Endothelial cell of umbilical vein (primary cell): ENCODE measurements at regions of chr10 and their contacts with region 1.

Region 1: DNA sequence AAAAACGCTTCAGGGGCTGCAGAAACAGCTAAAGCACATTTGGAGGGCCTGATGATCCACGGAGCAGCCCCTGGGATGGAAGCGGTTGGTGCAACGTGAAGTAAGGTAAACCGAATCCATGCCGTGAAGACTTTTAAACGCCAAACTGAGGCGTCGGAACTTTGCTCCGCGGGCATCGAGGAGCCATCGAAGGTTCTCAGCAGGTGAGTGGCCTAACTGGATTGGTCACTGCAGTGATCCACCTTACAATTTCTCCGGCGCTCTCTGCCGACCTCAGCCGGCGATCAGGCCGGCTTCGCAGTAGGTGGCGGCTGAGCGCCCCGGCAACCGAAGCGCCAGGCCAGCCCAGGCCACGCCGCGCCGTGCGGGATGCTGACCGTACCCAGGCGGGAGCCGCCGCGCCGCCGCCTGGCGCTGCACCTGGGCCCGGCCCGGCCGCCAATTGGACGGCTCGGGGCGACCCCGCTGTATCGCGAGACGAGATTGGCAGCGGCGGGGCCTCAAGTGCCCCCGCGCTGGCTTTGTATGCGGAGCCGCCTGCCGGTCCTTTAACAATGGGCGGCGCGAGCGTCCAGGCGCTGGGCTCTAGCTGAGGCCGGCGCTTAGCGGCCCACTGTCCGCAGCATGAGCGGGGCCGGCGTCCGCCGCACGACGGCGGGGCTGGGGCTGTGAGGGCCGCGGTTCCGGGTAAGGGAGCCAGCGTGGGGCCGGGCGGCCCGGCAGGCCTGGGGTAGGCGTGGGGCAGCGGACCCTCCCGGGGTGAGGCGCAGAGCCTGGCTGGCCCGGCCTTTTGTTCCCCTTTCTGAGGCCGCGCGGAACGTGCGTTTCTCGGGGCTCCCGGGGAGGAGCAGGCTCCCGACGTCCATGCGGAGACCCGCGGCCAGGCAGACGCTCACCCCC is at the start of gene CCNJ:
- DNase-seq: peak; percentile 91
- H3K4me3 ChIP-seq: peak within 1 kb of the TSS; percentile 78 to 99 (median 98)
- H3K27ac ChIP-seq: peak within 1 kb of the TSS; percentile 76
- H3K4me1 ChIP-seq: peaks cover 28% of the 10 kb centered on the region
- H3K27me3 ChIP-seq: no peaks in the 10 kb centered on the region
- CTCF ChIP-seq: peak in 1 of 2 donors; percentile 10
- POLR2A ChIP-seq: peak; percentile 95
- total RNA-seq, gene CCNJ: 22.4 and 25.5 TPM in 2 replicates

Region 2: GRCh38 chr10:95941115-95941514 is 102.2 kb before region 1 on chr10:
- CTCF ChIA-PET with region 1: no interaction called
- POLR2A ChIA-PET with region 1: no interaction called
- dilution Hi-C with region 1: no loop called
- intact Hi-C with region 1: no loop called
- DNase-seq: no peak
- H3K4me3 ChIP-seq: no peak overlapping the region
- H3K27ac ChIP-seq: no peak overlapping the region
- H3K4me1 ChIP-seq: no peaks in the 10 kb centered on the region
- H3K27me3 ChIP-seq: no peaks in the 10 kb centered on the region
- CTCF ChIP-seq: no peak
- POLR2A ChIP-seq: no peak

Region 3: DNA sequence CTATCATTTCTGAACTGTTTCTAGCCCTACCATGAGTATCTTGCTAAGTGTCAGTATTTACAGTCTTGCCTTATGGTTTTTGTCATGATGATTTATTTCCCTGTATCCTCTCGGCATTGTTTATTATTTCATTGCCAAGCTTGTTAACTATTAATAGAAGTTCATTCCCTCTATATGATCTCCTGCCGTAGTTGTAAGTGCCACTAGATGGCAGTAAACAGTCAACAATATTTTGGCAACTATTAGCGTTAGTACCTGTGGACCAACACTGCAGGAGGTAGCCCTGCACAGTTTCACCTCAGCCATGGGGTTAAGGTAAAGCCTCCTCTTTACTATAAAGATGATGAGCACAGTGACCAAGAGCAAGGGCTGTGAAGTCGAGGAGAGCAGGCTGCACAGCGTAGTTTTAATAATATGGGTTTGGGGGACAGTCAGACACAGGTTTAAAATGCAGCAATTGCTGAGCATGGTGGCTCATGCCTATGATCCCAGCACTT is 26.0 kb before region 1 on chr10:
- CTCF ChIA-PET with region 1: interaction called, 12 read pairs
- POLR2A ChIA-PET with region 1: no interaction called
- dilution Hi-C with region 1: no loop called
- intact Hi-C with region 1: no loop called
- DNase-seq: peak; percentile 87
- H3K4me3 ChIP-seq: no peak overlapping the region
- H3K27ac ChIP-seq: no peak overlapping the region
- H3K4me1 ChIP-seq: no peaks in the 10 kb centered on the region
- H3K27me3 ChIP-seq: peaks cover 0 to 8% of the 10 kb centered on the region in 2 experiments
- CTCF ChIP-seq: peak; percentile 65 to 71
- POLR2A ChIP-seq: no peak

Region 4: GRCh38 chr10:96073722-96074121 is 30.4 kb after region 1 on chr10:
- CTCF ChIA-PET with region 1: interaction called, 4 read pairs
- POLR2A ChIA-PET with region 1: interaction called, 4 read pairs
- dilution Hi-C with region 1: no loop called
- intact Hi-C with region 1: loop called (anchors 1 kb)
- DNase-seq: peak; percentile 78
- H3K4me3 ChIP-seq: no peak overlapping the region
- H3K27ac ChIP-seq: peak overlapping the region; percentile 57
- H3K4me1 ChIP-seq: peaks cover 27% of the 10 kb centered on the region
- H3K27me3 ChIP-seq: no peaks in the 10 kb centered on the region
- CTCF ChIP-seq: no peak
- POLR2A ChIP-seq: no peak

Region 5: GRCh38 chr10:96129387-96130325 is 86.4 kb after region 1 on chr10 and contains the start of gene ZNF518A:
- CTCF ChIA-PET with region 1: interaction called, 4 read pairs
- POLR2A ChIA-PET with region 1: interaction called, 5 read pairs
- dilution Hi-C with region 1: no loop called
- intact Hi-C with region 1: loop called (anchors 1 kb)
- DNase-seq: peak; percentile 92
- H3K4me3 ChIP-seq: peak within 1 kb of the TSS; percentile 38 to 96 (median 61)
- H3K27ac ChIP-seq: peak within 1 kb of the TSS; percentile 91
- H3K4me1 ChIP-seq: peaks cover 15% of the 10 kb centered on the region
- H3K27me3 ChIP-seq: no peaks in the 10 kb centered on the region
- CTCF ChIP-seq: no peak
- POLR2A ChIP-seq: peak; percentile 77
- total RNA-seq, gene ZNF518A: 11.9 and 12.1 TPM in 2 replicates

Region 6: GRCh38 chr10:96586419-96587263 is 543.4 kb after region 1 on chr10 and contains the start of gene TM9SF3:
- CTCF ChIA-PET with region 1: no interaction called
- POLR2A ChIA-PET with region 1: no interaction called
- dilution Hi-C with region 1: no loop called
- intact Hi-C with region 1: loop called (anchors 10 kb)
- DNase-seq: peak; percentile 84
- H3K4me3 ChIP-seq: peak within 1 kb of the TSS; percentile 59 to 92 (median 61)
- H3K27ac ChIP-seq: peak within 1 kb of the TSS; percentile 98
- H3K4me1 ChIP-seq: peaks cover 53% of the 10 kb centered on the region
- H3K27me3 ChIP-seq: no peaks in the 10 kb centered on the region
- CTCF ChIP-seq: no peak
- POLR2A ChIP-seq: peak; percentile 26
- total RNA-seq, gene TM9SF3: 142 and 144 TPM in 2 replicates

Region 7: DNA sequence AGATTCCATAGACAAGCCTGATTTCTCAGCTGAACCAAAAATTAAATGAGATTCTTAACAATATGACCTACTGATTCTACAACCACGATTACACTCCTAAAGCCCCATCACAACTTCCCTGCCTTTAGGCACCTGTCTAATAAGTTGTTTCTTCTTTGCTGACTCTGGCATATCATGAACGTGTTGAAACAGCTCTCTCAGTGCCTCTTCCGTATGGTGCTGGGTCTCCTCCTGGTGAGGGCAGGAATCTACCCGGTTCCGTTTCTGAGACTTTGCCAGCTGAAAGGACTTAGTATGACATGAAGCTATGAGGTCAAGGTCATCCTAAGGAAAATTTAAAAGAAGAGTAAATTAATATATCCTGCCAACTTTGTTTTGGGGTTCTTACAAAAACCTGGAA is 1200.6 kb after region 1 on chr10:
- CTCF ChIA-PET with region 1: no interaction called
- POLR2A ChIA-PET with region 1: no interaction called
- dilution Hi-C with region 1: no loop called
- intact Hi-C with region 1: no loop called
- DNase-seq: no peak
- H3K4me3 ChIP-seq: no peak overlapping the region
- H3K27ac ChIP-seq: no peak overlapping the region
- H3K4me1 ChIP-seq: no peaks in the 10 kb centered on the region
- H3K27me3 ChIP-seq: no peaks in the 10 kb centered on the region
- CTCF ChIP-seq: no peak
- POLR2A ChIP-seq: no peak

Region 8: DNA sequence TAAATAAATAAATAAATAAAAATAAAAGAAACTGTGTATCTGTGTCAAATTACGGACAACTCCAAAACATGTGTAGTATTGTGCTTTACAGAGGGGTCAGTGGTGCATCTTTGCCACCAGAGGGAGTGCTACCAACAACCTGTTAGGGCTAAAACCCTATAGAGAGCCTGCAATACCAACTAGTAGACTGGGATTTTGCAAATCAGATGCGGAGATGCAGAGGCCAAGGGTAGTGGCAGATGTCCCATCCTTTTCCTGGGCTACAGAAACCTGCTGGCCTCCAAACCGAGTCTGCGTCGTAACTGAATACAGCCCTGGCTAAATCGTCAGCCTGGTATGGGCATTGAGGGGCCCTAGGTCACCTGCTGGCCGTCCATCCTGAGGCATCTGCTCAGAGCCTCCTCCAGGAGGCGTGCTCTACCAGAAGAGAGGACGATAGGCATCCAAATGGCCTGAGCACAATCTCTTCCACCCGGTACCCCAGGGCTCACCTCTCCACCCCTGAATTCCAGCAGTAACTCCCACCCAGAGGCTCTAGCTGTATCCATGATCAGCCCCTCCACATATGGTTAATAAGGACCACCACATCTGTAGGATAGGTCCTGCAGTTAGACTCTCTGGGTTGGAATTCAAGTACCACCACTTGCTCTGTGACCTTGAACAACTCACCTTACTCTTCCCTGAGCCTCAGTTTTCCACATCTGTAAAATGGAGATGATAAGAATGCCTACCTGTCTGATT is 1364.1 kb after region 1 on chr10:
- CTCF ChIA-PET with region 1: no interaction called
- POLR2A ChIA-PET with region 1: no interaction called
- dilution Hi-C with region 1: no loop called
- intact Hi-C with region 1: no loop called
- DNase-seq: peak; percentile 86
- H3K4me3 ChIP-seq: peak overlapping the region in 1 of 3 experiments; percentile 31
- H3K27ac ChIP-seq: no peak overlapping the region
- H3K4me1 ChIP-seq: no peaks in the 10 kb centered on the region
- H3K27me3 ChIP-seq: no peaks in the 10 kb centered on the region
- CTCF ChIP-seq: peak; percentile 59 to 76
- POLR2A ChIP-seq: no peak